Activated T-helper 1 cell treated with anti-CD3 and anti-CD28 coated beads, Interleukin-12 subunit alpha, Interleukin-12 subunit beta, Interleukin-2, Interleukin-4 antibody, amounts not matched to agents 30 ng/mL and 10 ng/mL and 1 ng/mL, durations not matched to agents 14 hours and 24 hours and 36 hours (primary cell): ENCODE measurements at regions of chr6 and their contacts with region 1.

Region 1: DNA sequence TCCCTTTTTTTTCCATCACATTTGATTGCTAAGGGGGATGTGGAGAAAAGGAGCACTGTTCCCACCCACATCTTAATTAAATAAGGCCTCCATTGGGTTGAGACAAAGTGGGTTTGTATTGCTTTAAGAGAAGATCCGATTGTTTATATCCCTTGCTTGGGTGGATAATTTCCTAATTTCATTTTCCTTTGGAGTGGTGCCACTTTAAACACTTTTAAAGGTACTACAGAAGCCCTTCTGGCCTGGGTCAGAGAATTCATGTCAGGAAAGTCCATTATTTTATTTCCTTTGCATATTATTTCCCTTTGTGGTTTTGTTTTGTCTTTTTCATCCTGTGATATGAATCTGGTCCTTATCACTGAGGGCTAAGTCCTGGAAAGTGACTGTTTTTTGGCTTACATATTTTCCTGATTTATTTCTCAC is 56.9 kb downstream of the PHACTR2 start:
- DNase-seq: no peak
- H3K4me3 Mint-ChIP-seq: no peak overlapping the region
- H3K27ac Mint-ChIP-seq: no peak overlapping the region
- H3K4me1 Mint-ChIP-seq: peaks cover 41% of the 10 kb centered on the region
- H3K27me3 Mint-ChIP-seq: no peaks in the 10 kb centered on the region

Region 2: GRCh38 chr6:143575440-143575839 is 159.2 kb before region 1 on chr6:
- intact Hi-C with region 1: loop called (anchors 10 kb)
- DNase-seq: peak; percentile 48
- H3K4me3 Mint-ChIP-seq: no peak overlapping the region
- H3K27ac Mint-ChIP-seq: no peak overlapping the region
- H3K4me1 Mint-ChIP-seq: peaks cover 12% of the 10 kb centered on the region
- H3K27me3 Mint-ChIP-seq: no peaks in the 10 kb centered on the region

Region 3: DNA sequence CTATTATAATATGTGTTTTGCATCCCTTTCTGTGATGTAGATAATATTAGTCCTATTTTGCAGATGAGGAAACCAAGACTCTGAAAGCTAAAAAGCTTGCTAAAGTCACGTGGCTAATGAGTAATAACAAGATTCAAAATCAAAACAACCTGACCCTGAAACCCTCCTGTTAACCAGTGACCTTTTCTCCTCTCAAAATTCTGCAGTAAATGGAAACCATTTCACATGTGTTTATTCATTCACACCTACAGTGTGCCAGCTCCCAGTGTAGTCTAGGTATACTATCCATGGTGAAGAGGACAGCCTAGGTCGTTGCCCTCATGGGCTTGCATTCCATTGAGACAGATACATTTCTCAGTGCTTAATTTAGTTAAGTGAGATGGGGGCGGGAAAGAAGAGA is 87.5 kb before region 1 on chr6:
- intact Hi-C with region 1: loop called (anchors 5 kb)
- DNase-seq: no peak
- H3K4me3 Mint-ChIP-seq: peak overlapping the region; percentile 12
- H3K27ac Mint-ChIP-seq: peak overlapping the region; percentile 59
- H3K4me1 Mint-ChIP-seq: peaks cover 27% of the 10 kb centered on the region
- H3K27me3 Mint-ChIP-seq: no peaks in the 10 kb centered on the region

Region 4: DNA sequence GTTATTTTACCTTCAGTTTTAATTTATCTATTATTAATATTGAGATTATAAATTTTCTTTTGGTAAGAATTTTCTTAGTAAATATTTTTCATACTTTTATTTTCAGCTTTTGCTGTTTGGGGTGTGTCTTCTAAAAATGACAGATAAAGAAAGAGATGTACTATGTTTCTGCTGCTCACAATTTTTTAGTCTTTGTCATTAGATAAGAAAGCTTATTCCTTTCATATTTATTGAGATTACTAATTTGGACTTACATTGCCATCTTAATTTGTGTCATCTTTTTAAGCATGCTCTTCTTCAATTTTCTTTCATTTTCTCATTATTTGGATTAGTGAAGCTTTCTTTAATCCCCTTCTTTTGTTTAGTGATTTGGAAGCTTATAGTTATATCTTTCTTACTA is 70.5 kb before region 1 on chr6:
- intact Hi-C with region 1: no loop called
- DNase-seq: no peak
- H3K4me3 Mint-ChIP-seq: no peak overlapping the region
- H3K27ac Mint-ChIP-seq: no peak overlapping the region
- H3K4me1 Mint-ChIP-seq: peaks cover 6% of the 10 kb centered on the region
- H3K27me3 Mint-ChIP-seq: peaks cover 3% of the 10 kb centered on the region

Region 5: DNA sequence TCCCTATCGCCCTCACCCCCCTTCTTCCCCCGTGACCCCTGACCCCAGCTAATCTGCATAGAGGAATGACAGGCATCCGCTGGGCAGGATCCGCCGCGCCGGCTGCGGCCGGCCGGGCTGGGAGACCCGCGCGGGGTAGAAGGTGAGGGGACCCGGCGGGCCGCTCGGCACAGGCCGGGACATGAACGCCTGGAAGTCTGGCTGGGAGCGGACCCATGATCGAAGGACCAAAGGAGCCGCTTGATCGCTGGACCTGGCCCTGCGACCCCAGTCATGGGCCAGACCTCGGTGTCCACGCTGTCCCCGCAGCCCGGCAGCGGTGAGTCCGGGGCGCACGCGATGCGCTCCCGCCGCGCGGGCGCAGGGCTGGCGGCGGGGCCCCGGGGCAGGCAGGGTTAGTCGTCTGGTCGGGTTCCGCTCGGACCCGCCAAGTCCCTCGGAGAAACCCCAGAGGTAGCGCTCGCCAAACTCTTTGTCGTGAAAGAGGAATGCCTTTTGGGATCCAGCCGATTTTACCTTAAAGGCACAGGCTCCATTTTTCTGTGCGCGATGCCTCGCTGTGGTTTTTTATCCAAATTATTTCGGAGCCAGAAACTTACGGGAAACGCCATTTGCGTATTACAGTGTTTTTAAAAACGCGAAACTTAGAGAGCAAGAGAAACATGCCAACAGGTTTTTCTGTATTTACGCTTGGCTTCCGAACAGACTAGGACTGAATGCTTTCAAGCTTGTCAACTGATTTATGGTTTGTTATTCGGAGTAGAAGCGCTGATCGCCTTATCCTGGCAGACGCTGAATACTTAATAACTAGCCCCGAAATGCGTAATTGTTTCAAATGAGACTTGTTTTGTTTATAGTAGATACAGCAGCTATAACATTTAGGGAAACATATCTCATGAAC is 56.5 kb before region 1 on chr6 and contains the start of gene PHACTR2:
- intact Hi-C with region 1: loop called (anchors 5 kb)
- DNase-seq: peak; percentile 4
- H3K4me3 Mint-ChIP-seq: peak within 1 kb of the TSS; percentile 84
- H3K27ac Mint-ChIP-seq: peak within 1 kb of the TSS; percentile 18
- H3K4me1 Mint-ChIP-seq: peaks cover 33% of the 10 kb centered on the region
- H3K27me3 Mint-ChIP-seq: peaks cover 14% of the 10 kb centered on the region
- total RNA-seq, gene PHACTR2: 63.5 and 64.5 TPM in 2 replicates

Region 6: DNA sequence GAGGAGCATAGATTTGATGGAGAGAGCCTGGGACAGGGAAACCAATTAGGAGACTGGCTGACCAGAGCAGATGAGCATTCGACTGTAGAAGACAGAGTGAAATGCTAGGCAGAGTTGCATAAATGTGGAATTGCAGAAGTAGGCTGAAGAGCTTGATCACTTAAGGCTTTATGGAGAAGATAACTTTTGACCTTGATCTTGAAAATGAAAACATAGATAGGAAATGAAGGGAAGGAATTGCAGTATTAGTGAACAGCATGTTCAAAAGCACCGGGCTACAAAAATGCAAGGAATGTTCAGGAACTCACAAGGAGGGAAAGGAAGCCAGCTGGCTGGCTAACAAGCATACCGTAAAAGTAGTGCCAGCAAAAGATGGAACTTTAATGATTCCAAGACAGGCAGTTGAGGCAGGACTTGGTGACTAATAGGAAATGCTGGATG is 88.0 kb after region 1 on chr6:
- intact Hi-C with region 1: no loop called
- DNase-seq: no peak
- H3K4me3 Mint-ChIP-seq: no peak overlapping the region
- H3K27ac Mint-ChIP-seq: no peak overlapping the region
- H3K4me1 Mint-ChIP-seq: no peaks in the 10 kb centered on the region
- H3K27me3 Mint-ChIP-seq: no peaks in the 10 kb centered on the region